ENCODE measurements at regions of chr1 and their contacts with region 1.

Region 1: DNA sequence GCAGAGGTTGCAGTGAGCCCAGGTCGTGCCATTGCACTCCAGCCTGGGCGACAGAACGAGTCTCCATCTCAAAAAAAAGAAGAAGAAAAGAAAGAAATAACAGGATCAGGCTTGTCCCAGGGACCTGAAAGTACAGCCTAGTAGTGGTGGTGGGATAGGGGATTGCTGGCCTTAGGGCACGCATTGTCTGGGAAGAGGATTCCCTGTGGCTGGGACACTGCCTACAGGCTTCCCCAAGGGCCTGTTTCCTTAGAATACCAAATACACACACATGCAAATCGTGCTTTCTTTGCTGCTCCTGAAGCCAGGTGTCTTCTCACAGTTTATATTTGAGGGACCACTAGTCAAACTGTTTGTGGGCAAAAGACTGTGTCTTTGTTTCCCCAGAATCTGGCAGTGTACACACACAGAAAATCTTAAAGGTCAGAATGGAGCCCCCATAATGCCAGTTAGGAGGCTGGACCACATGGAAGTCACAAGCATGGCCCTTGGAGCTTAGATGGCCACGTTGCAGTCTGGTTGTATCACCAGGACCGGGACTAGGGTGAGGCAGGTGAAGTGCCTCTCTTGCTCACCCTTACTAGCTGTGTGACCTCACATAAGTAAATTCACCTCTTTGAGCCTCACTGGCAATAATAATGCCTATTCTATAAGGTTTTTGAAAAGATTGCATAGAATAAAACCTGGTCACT is 12.7 kb upstream of the ASAP3 start:
- DNase-seq: no peak
- ATAC-seq: peak in 2 of 4 experiments; percentile 12 to 20
- H3K4me3 ChIP-seq: no peak overlapping the region
- H3K4me3 Mint-ChIP-seq: no peak overlapping the region
- H3K27ac ChIP-seq: no peak overlapping the region
- H3K27ac Mint-ChIP-seq: no peak overlapping the region
- H3K4me1 ChIP-seq: peaks cover 0 to 4% of the 10 kb centered on the region in 2 experiments
- H3K4me1 Mint-ChIP-seq: peaks cover 3 to 6% (median 5%) of the 10 kb centered on the region in 3 donors
- H3K27me3 ChIP-seq: peaks cover 0 to 7% of the 10 kb centered on the region in 2 experiments
- H3K27me3 Mint-ChIP-seq: peaks cover 0 to 3% of the 10 kb centered on the region in 2 donors

Region 2: DNA sequence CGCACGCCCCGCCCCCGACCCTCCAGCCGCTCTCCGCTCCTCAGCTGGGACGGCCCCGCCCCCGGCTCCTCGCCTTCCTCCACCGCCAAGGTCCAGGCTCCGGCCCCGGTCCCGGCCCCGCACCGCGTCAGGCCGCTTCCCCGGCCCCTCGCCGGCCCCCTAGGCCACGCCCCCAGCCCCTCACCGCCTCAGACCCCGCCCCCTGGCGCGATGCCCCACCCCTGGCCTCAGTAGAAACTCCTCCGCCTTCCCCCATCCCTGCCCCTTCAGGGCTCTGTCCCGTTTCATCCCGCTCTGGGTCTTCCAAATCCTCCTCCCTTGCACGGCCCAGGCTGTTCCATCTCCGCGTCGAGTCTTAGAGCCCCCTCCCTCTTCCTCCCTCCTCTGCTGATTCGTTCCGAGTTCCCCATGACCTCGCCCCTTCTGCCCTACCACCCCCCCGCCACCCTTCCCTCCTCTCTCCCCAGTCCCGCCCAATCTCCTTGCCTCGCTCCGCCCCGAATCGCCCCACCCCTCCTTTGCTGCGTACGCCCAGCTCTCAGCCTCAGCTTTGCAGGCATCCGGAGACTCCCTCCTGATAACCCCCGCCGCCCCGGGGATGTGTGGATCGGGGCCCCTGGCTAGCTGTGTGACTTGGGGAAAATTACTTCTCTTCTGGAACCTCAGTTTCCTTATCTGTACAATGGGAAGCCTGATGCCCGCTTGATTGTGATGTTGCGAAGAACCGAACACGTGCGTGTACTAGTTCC is 12.2 kb before region 1 on chr1:
- CTCF ChIA-PET with region 1: interaction called, 3 to 33 read pairs
- POLR2A ChIA-PET with region 1: no interaction called
- DNase-seq: peak; percentile 85 to 95 (median 91)
- ATAC-seq: peak; percentile 88 to 90 (median 89)
- H3K4me3 ChIP-seq: peak overlapping the region; percentile 60 to 62
- H3K4me3 Mint-ChIP-seq: peak overlapping the region; percentile 83 to 85 (median 84)
- H3K27ac ChIP-seq: no peak overlapping the region
- H3K27ac Mint-ChIP-seq: peak overlapping the region in 1 of 2 donors; percentile 77
- H3K4me1 ChIP-seq: peaks cover 2 to 15% of the 10 kb centered on the region in 2 experiments
- H3K4me1 Mint-ChIP-seq: peaks cover 15 to 17% (median 16%) of the 10 kb centered on the region in 3 donors
- H3K27me3 ChIP-seq: peaks cover 3 to 31% of the 10 kb centered on the region in 2 experiments
- H3K27me3 Mint-ChIP-seq: peaks cover 16 to 18% of the 10 kb centered on the region in 2 donors

Region 3: DNA sequence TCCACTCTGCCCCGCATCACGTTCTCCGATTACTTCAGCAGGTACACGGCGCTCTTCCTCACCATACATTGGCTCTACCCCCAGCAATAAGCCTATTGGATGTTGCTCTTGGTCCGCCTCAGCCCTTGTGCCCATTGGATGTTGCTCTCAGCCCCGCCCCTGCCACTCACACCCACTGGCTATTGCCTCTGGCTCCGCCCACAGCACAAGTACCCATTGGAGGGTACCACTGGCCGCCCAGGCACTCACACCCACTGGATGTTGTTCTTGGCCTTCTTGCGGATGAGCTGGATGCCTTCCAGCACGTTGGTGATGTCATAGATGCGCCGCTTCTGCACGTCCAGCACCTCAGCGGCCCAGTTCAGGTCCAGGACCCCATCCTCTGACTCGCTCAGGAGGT is 25.0 kb after region 1 on chr1:
- CTCF ChIA-PET with region 1: interaction called, 8 to 52 read pairs
- POLR2A ChIA-PET with region 1: interaction called, 3 to 15 read pairs
- DNase-seq: no peak
- ATAC-seq: no peak
- H3K4me3 ChIP-seq: no peak overlapping the region
- H3K4me3 Mint-ChIP-seq: no peak overlapping the region
- H3K27ac ChIP-seq: no peak overlapping the region
- H3K27ac Mint-ChIP-seq: peak overlapping the region; percentile 25 to 50
- H3K4me1 ChIP-seq: peaks cover 21 to 35% of the 10 kb centered on the region in 2 experiments
- H3K4me1 Mint-ChIP-seq: peaks cover 17 to 42% (median 32%) of the 10 kb centered on the region in 3 donors
- H3K27me3 ChIP-seq: no peaks in the 10 kb centered on the region
- H3K27me3 Mint-ChIP-seq: no peaks in the 10 kb centered on the region

Region 4: DNA sequence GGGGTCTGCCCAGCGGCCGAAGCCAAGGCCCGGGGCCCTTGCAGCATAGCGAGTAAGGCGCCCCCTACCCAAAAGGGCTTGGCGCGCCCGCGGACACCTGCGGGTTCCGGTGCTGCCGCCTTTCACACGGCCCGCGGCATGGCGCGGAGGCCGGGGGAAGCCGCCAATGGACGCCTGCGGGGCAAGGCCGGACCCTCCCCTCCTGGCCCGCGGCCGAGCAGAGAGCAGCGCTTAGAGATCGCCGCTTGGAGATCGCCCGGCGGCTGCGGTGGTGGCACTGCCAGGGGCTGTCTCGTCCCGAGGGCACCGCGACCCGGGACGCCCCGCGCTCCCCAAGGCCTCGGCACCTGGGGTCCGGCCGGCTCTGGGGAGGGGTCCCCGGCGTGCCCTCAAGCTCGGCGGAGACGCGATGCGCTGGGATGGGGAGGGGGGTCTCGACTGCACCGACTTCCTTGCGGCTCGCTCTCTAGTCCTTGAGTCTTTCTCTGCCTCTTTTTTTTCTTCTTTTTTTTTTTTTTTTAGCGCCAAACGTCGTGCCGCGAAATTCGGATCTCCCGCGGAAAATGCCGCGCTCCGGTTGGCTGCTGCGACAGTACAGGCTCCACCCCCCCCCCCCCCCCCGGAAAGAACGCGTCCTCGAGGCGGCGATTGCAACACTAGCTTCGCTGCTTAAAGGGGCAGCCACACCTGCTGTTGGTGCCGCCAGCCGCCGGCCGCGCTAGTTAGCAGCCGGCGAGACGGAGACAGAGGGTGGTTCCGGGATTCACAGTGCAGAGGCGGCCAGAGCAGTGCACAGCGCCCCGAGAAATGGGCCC is 34.3 kb after region 1 on chr1 and contains the start of gene E2F2:
- CTCF ChIA-PET with region 1: interaction called, 4 to 52 read pairs
- POLR2A ChIA-PET with region 1: interaction called in 1 of 2 experiments, 5 read pairs
- DNase-seq: peak; percentile 64 to 91 (median 77)
- ATAC-seq: peak; percentile 72 to 82 (median 74)
- H3K4me3 ChIP-seq: peak within 1 kb of the TSS; percentile 45 to 65
- H3K4me3 Mint-ChIP-seq: peak within 1 kb of the TSS; percentile 84 to 90 (median 85)
- H3K27ac ChIP-seq: peak within 1 kb of the TSS; percentile 40
- H3K27ac Mint-ChIP-seq: peak within 1 kb of the TSS; percentile 95 to 99
- H3K4me1 ChIP-seq: peaks cover 38 to 83% of the 10 kb centered on the region in 2 experiments
- H3K4me1 Mint-ChIP-seq: peaks cover 69 to 88% (median 70%) of the 10 kb centered on the region in 3 donors
- H3K27me3 ChIP-seq: no peaks in the 10 kb centered on the region
- H3K27me3 Mint-ChIP-seq: no peaks in the 10 kb centered on the region
- total RNA-seq, gene E2F2: 1.7 to 3.1 (median 2.5) TPM

Region 5: DNA sequence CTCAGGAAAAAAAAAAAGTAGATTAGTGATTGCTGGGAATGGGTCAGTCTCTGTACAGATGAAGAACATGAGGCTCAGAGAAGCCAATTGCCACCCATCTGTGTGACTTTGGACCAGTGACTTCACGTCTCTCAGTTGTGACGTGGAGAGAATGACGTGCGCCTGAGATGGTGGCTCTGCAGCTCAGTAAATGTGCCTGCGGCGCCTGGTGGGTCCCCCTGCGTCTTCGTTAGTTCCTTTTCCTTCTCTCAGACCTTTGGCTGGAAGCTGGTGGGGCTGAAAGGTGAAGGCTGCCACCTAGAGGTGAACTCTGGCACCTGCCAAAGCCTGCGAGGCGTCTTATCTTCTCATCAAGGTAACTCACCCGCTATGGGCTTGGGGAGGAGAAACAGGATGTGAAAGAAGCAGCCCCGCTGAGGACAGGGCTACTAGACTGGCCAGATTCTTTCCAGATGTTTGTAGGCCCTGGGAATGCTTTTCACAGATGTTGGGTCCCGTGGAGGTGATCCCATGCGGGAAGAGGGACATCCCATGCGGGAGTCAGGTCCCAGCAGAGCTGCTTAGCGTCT is 43.1 kb after region 1 on chr1:
- CTCF ChIA-PET with region 1: interaction called, 24 to 99 read pairs
- POLR2A ChIA-PET with region 1: interaction called, 5 to 7 read pairs
- DNase-seq: peak; percentile 81 to 96 (median 88)
- ATAC-seq: peak; percentile 94 to 98 (median 98)
- H3K4me3 ChIP-seq: no peak overlapping the region
- H3K4me3 Mint-ChIP-seq: peak overlapping the region; percentile 30 to 37 (median 35)
- H3K27ac ChIP-seq: peak overlapping the region; percentile 44
- H3K27ac Mint-ChIP-seq: peak overlapping the region; percentile 72 to 83
- H3K4me1 ChIP-seq: peaks cover 9 to 17% of the 10 kb centered on the region in 2 experiments
- H3K4me1 Mint-ChIP-seq: peaks cover 13 to 31% (median 13%) of the 10 kb centered on the region in 3 donors
- H3K27me3 ChIP-seq: no peaks in the 10 kb centered on the region
- H3K27me3 Mint-ChIP-seq: no peaks in the 10 kb centered on the region

Region 6: DNA sequence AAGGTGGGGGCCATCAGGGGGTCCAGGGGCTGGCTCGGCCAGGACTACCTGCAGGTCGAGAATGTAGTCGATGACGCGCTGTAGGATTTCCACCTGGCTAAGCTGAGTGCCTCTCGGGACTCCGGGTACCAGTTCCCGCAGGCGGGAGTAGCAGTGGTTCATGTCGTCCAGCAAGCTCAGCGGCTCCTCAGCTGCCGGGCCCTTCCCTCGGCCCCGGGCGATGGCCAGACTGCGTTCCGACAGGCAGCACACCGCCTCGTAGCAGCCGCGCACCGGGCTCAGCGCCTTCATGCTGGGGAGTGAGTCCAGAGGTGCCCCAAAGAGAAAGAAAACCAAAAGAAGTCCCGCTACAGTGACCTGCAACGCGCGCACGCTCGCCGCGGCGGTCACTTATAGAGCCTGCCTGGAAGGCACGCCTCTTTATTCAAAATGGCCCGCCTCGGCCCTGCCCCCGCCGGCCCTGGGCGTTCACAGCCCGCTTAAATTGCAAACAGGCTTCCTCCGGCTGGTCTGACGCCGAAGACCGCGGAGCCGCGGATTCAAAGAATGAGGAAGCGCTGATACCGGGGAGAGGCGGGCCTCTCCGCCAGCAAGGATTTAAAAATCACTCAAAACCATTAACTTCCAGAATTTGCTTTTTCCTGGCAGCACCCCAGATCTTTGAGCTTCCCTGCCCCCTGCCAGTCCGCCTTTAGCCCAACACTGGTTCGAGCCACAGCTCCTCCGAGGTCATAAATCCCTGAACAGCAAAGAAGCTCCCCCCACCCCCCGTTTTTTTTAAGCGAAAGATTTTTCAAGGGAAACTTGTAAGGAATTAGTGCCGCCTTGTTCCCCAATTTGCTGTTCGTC is 62.7 kb after region 1 on chr1 and contains the start of gene ID3:
- CTCF ChIA-PET with region 1: interaction called in 1 of 2 experiments, 14 read pairs
- POLR2A ChIA-PET with region 1: no interaction called
- DNase-seq: peak; percentile 63 to 95 (median 85)
- ATAC-seq: peak; percentile 65 to 70 (median 68)
- H3K4me3 ChIP-seq: peak within 1 kb of the TSS; percentile 79 to 100
- H3K4me3 Mint-ChIP-seq: peak within 1 kb of the TSS; percentile 85 to 96 (median 95)
- H3K27ac ChIP-seq: peak within 1 kb of the TSS; percentile 64
- H3K27ac Mint-ChIP-seq: peak within 1 kb of the TSS; percentile 87 to 89
- H3K4me1 ChIP-seq: peaks cover 36 to 68% of the 10 kb centered on the region in 2 experiments
- H3K4me1 Mint-ChIP-seq: peaks cover 63 to 75% (median 73%) of the 10 kb centered on the region in 3 donors
- H3K27me3 ChIP-seq: peaks cover 0 to 10% of the 10 kb centered on the region in 2 experiments
- H3K27me3 Mint-ChIP-seq: no peaks in the 10 kb centered on the region
- total RNA-seq, gene ID3: 20.7 to 99.7 (median 81.3) TPM

Region 7: DNA sequence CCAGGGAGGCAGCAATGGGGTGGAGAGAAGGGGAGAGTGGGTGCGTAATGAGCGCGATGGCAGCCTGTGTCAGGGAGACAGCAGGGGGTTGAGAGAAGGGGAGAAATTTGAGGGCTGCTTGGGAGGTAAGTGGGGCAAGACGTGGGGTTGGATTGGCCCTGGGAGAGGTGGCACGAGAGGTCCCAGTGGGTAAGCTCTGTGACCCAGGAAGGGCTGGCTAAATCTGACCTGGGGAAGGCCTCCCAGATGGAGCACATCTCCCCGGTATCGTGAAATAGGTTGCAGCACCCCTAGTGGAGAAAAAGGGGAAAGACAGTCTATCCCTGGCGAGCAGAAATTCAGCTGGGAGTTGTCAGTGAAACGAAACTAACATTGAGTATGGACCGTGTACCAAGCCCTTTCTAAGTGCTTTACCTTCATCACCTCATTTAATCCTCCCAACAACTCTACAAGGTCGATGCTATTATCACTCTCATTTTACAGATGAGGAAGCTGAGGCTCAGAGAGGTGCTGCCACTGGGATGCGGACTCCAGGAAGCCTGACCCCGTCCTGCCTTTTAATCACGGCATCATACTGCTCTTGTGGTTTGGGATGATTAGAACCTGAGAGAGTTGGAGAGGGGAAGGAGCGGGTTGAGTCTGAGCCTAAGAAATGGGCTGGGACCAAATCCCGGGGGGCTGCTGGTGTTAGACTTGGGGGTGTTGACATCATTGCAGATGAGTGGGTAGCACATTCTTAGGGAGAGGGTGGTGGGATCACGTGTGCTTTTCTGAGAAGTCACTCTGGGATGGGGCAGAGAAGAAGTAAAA is 138.4 kb after region 1 on chr1:
- CTCF ChIA-PET with region 1: interaction called, 7 to 50 read pairs
- POLR2A ChIA-PET with region 1: no interaction called
- DNase-seq: peak in 31 of 35 experiments; percentile 17 to 83 (median 42)
- ATAC-seq: peak; percentile 74 to 88 (median 82)
- H3K4me3 ChIP-seq: peak overlapping the region; percentile 22 to 62
- H3K4me3 Mint-ChIP-seq: peak overlapping the region; percentile 64 to 72 (median 67)
- H3K27ac ChIP-seq: peak overlapping the region; percentile 34
- H3K27ac Mint-ChIP-seq: peak overlapping the region; percentile 91
- H3K4me1 ChIP-seq: peaks cover 16 to 25% of the 10 kb centered on the region in 2 experiments
- H3K4me1 Mint-ChIP-seq: peaks cover 34 to 41% (median 40%) of the 10 kb centered on the region in 3 donors
- H3K27me3 ChIP-seq: peaks cover 0 to 15% of the 10 kb centered on the region in 2 experiments
- H3K27me3 Mint-ChIP-seq: no peaks in the 10 kb centered on the region